K562 (cell line): ENCODE measurements at regions of chr12 and their contacts with region 1.

Region 1: DNA sequence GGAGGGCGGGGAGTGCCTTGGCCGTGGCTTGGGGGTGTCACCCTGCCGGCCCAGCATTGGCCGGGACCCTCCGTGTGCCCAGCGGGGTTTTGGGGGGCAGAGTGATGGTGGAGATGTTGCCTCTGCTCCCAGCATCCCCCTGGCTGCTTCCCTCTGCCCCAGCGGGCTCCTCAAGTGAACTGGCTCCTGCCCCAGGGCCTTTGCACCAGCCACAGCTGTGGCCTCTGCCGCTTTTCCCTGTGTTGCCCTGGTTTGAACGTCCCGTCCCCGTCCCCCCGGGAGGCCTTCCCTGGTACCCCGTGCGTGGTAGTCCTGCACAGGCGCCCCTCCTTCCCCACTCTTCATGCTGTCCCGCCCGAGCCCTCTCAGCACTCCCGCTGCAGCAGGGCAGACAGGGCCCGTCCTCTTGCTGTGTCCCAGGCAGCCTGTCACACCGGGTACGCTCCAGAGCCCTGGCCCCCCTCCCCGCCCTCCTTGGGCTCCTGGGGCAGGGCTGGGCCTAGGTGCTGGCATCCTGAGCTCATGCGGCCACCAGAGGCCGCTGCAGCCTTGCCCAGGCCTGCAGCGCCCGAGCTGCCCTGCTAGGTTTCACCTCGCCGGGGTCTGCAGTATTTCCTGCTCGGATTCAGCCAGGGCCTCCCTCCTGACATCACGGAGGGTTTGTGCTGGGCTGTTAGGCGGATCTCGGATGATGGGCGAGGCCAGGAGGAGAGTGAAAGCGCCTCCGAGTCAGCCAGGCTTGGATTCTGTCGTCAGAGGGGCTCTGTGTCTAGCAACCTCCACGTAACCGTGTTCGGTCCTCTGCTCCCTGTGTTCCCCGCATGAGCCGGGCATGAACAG is 9.5 kb downstream of the NOC4L start:
- DNase-seq: peak; percentile 58 to 71 (median 64)
- ATAC-seq: peak; percentile 99
- H3K4me3 ChIP-seq: no peak overlapping the region
- H3K27ac ChIP-seq: no peak overlapping the region
- H3K4me1 ChIP-seq: peaks cover 0 to 27% of the 10 kb centered on the region in 2 experiments; a peak in 2 of 5 replicates
- H3K27me3 ChIP-seq: no peaks in the 10 kb centered on the region; a peak in 1 of 5 replicates
- CTCF ChIP-seq: peak; percentile 82 to 90 (median 89)
- EP300 ChIP-seq: no peak
- POLR2A ChIP-seq: no peak; the same call in 1 of the 2 replicates
- RAD21 ChIP-seq: peak; percentile 64 to 84

Region 2: GRCh38 chr12:132018193-132018916 is 135.4 kb before region 1 on chr12:
- CTCF ChIA-PET with region 1: no interaction called
- POLR2A ChIA-PET with region 1: no interaction called
- in situ Hi-C with region 1: no loop called
- intact Hi-C with region 1: no loop called
- DNase-seq: peak; percentile 21 to 38 (median 28)
- ATAC-seq: peak; percentile 54; the same call in 2 of the 3 replicates
- H3K4me3 ChIP-seq: no peak overlapping the region
- H3K27ac ChIP-seq: no peak overlapping the region
- H3K4me1 ChIP-seq: peaks cover 0 to 4% of the 10 kb centered on the region in 2 experiments; a peak in 1 of 5 replicates
- H3K27me3 ChIP-seq: no peaks in the 10 kb centered on the region
- CTCF ChIP-seq: no peak
- EP300 ChIP-seq: no peak
- POLR2A ChIP-seq: no peak
- RAD21 ChIP-seq: no peak

Region 3: GRCh38 chr12:132218915-132219314 is 65.2 kb after region 1 on chr12:
- CTCF ChIA-PET with region 1: no interaction called
- POLR2A ChIA-PET with region 1: no interaction called
- in situ Hi-C with region 1: no loop called
- intact Hi-C with region 1: loop called (anchors 10 kb)
- DNase-seq: peak; percentile 44 to 72 (median 70)
- ATAC-seq: peak; percentile 87
- H3K4me3 ChIP-seq: no peak overlapping the region
- H3K27ac ChIP-seq: no peak overlapping the region
- H3K4me1 ChIP-seq: peaks cover 0 to 3% of the 10 kb centered on the region in 2 experiments; a peak in 1 of 5 replicates
- H3K27me3 ChIP-seq: peaks cover 0 to 33% of the 10 kb centered on the region in 2 experiments; a peak in 2 of 5 replicates
- CTCF ChIP-seq: peak; percentile 51 to 62 (median 52)
- EP300 ChIP-seq: no peak
- POLR2A ChIP-seq: no peak
- RAD21 ChIP-seq: peak in 1 of 2 experiments; percentile 49; a peak in 3 of 4 replicates